Vagina (tissue), 2 donors: ENCODE measurements at regions of chr4 and their contacts with region 1.

Region 1: GRCh38 chr4:81351654-81352445 is 119.9 kb downstream of the RASGEF1B start:
- DNase-seq: no peak
- H3K4me3 ChIP-seq: no peak overlapping the region
- H3K27ac ChIP-seq: no peak overlapping the region
- H3K4me1 ChIP-seq: peaks cover 8% of the 10 kb centered on the region
- H3K27me3 ChIP-seq: no peaks in the 10 kb centered on the region
- CTCF ChIP-seq: peak; percentile 51 to 73 (median 71)
- POLR2A ChIP-seq: no peak

Region 2: GRCh38 chr4:81069706-81070331 is 282.0 kb before region 1 on chr4:
- intact Hi-C with region 1: loop called (anchors 10 kb)
- DNase-seq: no peak
- H3K4me3 ChIP-seq: no peak overlapping the region
- H3K27ac ChIP-seq: no peak overlapping the region
- H3K4me1 ChIP-seq: no peaks in the 10 kb centered on the region
- H3K27me3 ChIP-seq: no peaks in the 10 kb centered on the region
- CTCF ChIP-seq: peak; percentile 61 to 72 (median 70)
- POLR2A ChIP-seq: no peak